Naive thymus-derived CD8-positive, alpha-beta T cell (primary cell): ENCODE measurements at regions of chr16 and their contacts with region 1.

Region 1: DNA sequence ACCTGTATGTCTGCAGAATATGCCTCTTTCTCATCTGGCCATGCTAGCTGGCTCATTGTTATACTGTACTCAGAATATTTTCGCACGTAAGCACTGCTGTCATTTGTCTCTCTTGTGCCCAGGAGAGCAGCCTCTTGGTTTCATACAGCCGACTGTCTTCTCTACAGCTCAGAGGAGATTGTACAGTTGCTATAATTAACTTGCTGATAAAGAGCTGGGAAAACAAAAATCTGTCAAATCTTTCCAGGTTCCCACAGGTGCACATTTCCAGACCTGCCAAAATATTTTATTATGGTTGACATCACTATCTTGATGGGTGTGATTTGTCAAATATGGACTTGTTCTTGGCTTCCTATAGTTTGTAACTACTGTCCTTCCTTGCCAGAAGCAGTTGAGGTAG is 122.7 kb downstream of the FTO start:
- DNase-seq: no peak
- ATAC-seq: no peak
- H3K4me3 Mint-ChIP-seq: no peak overlapping the region
- H3K27ac Mint-ChIP-seq: no peak overlapping the region
- H3K4me1 Mint-ChIP-seq: peaks cover 6 to 16% (median 8%) of the 10 kb centered on the region in 4 donors
- H3K27me3 Mint-ChIP-seq: no peaks in the 10 kb centered on the region

Region 2: DNA sequence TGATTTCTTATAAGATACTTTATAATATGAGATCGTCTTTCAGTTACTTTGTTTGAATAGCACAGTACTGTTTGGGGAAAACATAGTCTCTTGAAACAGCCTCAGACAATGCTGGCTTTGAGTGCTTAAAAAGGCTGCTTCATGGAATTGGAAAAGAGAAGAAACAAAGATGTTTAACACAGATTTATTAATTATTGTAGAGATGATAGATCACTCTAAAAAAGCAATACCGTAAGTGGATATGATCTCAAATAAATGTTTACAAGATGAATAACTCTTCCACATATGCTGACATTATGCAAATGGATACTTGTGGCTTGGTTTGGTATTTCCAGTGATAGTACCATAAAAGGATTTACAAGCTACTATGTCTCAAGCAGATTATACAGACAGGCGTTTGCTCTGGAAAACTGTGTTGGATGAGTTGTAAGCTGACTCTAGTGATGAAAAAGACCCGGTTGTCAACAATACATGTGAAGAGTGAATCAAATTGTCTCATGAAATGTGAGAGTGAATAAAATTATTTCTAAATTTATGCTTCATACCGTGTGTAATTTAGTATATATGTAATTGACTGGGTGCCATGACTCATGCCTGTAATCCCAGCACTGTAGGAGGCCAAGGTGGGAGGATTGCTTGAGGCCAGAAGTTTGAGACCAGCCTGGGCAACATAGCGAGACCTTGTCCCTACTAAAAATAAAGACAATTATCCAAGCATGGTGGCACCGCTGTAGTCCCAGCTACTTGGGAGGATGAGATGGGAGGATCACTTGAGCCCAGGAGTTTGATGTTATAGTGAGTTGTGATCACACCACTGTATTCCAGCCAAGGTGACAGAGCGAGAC is 17.3 kb before region 1 on chr16:
- POLR2A ChIA-PET with region 1: no interaction called
- DNase-seq: no peak
- ATAC-seq: no peak
- H3K4me3 Mint-ChIP-seq: no peak overlapping the region
- H3K27ac Mint-ChIP-seq: no peak overlapping the region
- H3K4me1 Mint-ChIP-seq: peaks cover 18 to 54% (median 23%) of the 10 kb centered on the region in 4 donors
- H3K27me3 Mint-ChIP-seq: no peaks in the 10 kb centered on the region

Region 3: GRCh38 chr16:53840456-53840855 is 13.8 kb after region 1 on chr16:
- POLR2A ChIA-PET with region 1: no interaction called
- DNase-seq: no peak
- ATAC-seq: no peak
- H3K4me3 Mint-ChIP-seq: no peak overlapping the region
- H3K27ac Mint-ChIP-seq: no peak overlapping the region
- H3K4me1 Mint-ChIP-seq: peaks cover 2 to 21% (median 12%) of the 10 kb centered on the region in 4 donors
- H3K27me3 Mint-ChIP-seq: no peaks in the 10 kb centered on the region

Region 4: GRCh38 chr16:53913099-53913870 is 86.6 kb after region 1 on chr16:
- POLR2A ChIA-PET with region 1: interaction called, 10 read pairs
- DNase-seq: peak in 1 of 10 donors; percentile 9
- ATAC-seq: peak in 1 of 2 donors; percentile 22
- H3K4me3 Mint-ChIP-seq: peak overlapping the region in 7 of 10 donors; percentile 4 to 62 (median 36)
- H3K27ac Mint-ChIP-seq: peak overlapping the region in 9 of 10 donors; percentile 18 to 79 (median 58)
- H3K4me1 Mint-ChIP-seq: peaks cover 0 to 13% (median 4%) of the 10 kb centered on the region in 4 donors
- H3K27me3 Mint-ChIP-seq: no peaks in the 10 kb centered on the region

Region 5: GRCh38 chr16:53925107-53925410 is 98.4 kb after region 1 on chr16:
- POLR2A ChIA-PET with region 1: no interaction called
- DNase-seq: no peak
- ATAC-seq: no peak
- H3K4me3 Mint-ChIP-seq: no peak overlapping the region
- H3K27ac Mint-ChIP-seq: no peak overlapping the region
- H3K4me1 Mint-ChIP-seq: peaks cover 7 to 14% (median 12%) of the 10 kb centered on the region in 4 donors
- H3K27me3 Mint-ChIP-seq: no peaks in the 10 kb centered on the region